Activated CD8-positive, alpha-beta memory T cell treated with anti-CD3 and anti-CD28 coated beads, Interleukin-2, amount 10 ng/mL, durations not matched to agents 7 days and 5 days (primary cell): ENCODE measurements at regions of chr7 and their contacts with region 1.

Region 1: GRCh38 chr7:47088329-47089067 is 493.4 kb downstream of the TNS3 start:
- DNase-seq: no peak
- ATAC-seq: no peak
- H3K4me3 Mint-ChIP-seq: no peak overlapping the region
- H3K27ac Mint-ChIP-seq: no peak overlapping the region
- H3K4me1 Mint-ChIP-seq: no peaks in the 10 kb centered on the region
- H3K27me3 Mint-ChIP-seq: no peaks in the 10 kb centered on the region

Region 2: DNA sequence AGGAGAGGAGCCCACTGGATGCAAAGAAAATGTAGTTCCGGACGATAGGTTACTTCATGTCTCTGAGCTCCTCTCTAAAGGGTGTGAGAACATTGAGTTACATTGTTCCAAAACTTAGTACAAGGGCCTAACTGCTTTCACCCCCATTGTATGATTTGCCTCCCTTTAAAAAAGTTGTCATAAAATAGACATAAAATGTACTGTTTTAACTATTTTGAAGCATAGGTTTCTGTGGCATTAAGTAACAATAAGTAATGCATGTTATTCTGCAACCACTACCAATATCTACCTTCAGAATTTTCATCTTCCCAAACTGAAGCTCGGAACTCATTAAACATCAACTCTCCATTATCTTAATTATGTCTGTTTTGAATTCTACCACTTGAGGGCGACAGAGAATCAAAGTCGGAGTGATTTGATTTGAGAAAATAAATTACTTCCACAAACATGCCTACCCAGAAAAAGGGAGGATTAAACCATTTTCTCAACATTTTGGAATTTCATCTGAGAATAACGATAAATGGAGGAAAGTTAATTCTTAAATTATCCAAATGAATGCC is 1197.5 kb before region 1 on chr7:
- CTCF ChIA-PET with region 1: interaction called, 13 read pairs
- DNase-seq: no peak
- ATAC-seq: no peak
- H3K4me3 Mint-ChIP-seq: no peak overlapping the region
- H3K27ac Mint-ChIP-seq: no peak overlapping the region
- H3K4me1 Mint-ChIP-seq: no peaks in the 10 kb centered on the region
- H3K27me3 Mint-ChIP-seq: peaks cover 62% of the 10 kb centered on the region

Region 3: DNA sequence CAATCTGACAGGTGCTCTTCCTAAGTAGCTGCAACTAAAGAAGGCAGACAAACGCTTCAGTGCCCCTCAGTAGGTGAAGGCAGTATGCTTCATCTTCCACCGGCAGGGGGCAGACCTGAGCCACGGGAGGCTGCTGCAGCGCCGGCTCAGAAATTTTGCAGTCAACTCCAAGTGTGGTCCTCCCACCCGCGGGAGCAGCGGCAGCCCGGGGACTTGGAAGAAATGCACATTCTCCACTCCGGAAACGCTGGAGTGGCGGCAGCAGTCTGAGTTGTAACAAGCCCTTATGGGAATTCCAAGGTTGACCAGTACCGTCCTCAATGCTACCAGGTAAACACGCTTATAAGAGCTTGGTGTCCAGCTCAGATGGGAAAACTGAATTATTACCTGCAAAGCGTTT is 1170.8 kb before region 1 on chr7:
- CTCF ChIA-PET with region 1: interaction called, 19 read pairs
- DNase-seq: peak; percentile 83
- ATAC-seq: peak; percentile 32
- H3K4me3 Mint-ChIP-seq: peak overlapping the region; percentile 36
- H3K27ac Mint-ChIP-seq: no peak overlapping the region
- H3K4me1 Mint-ChIP-seq: peaks cover 40% of the 10 kb centered on the region
- H3K27me3 Mint-ChIP-seq: peaks cover 42% of the 10 kb centered on the region

Region 4: GRCh38 chr7:46832136-46832535 is 256.4 kb before region 1 on chr7:
- CTCF ChIA-PET with region 1: no interaction called
- DNase-seq: no peak
- ATAC-seq: no peak
- H3K4me3 Mint-ChIP-seq: no peak overlapping the region
- H3K27ac Mint-ChIP-seq: no peak overlapping the region
- H3K4me1 Mint-ChIP-seq: no peaks in the 10 kb centered on the region
- H3K27me3 Mint-ChIP-seq: no peaks in the 10 kb centered on the region

Region 5: DNA sequence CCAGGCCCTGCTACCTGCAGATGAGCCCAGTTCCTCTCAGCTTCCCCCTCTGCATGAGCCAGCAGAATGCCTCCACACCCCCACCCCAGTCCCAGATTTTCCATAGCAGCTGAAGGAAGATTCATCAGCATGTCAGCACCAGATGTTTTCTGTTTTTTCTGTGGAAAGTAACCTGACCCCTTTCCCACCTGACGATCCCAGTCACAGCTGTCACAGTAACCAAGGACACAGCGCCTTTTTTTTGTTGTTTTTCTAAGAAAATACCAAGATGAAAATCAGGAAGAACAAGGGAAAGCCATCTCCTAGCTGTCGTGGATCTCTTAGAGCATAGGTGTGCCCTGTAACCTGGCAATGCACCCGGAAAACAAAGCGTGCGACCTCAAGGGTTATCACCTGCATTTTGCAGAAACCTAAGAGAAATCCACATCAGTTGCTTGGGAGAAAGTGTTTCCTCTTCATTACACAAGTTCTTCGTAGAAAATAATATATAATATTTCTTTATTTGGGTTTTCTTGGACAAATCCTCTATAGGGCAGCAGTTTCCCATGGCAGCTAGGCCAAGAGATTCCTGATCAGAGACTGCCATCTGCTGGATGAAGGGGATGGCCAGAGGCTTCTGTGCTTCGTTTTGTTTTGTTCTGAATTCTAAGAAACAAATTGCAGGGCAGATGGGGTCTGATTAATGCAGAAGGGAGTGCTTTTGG is 91.5 kb after region 1 on chr7:
- CTCF ChIA-PET with region 1: no interaction called
- DNase-seq: no peak
- ATAC-seq: no peak
- H3K4me3 Mint-ChIP-seq: no peak overlapping the region
- H3K27ac Mint-ChIP-seq: no peak overlapping the region
- H3K4me1 Mint-ChIP-seq: no peaks in the 10 kb centered on the region
- H3K27me3 Mint-ChIP-seq: no peaks in the 10 kb centered on the region